ENCODE measurements at regions of chr22 and their contacts with region 1.

Region 1: GRCh38 chr22:36470162-36470993 is 11.1 kb downstream of the TXN2 start:
- DNase-seq: no peak
- H3K4me3 ChIP-seq: 0 out of 2 replicates have a peak overlapping the region, but pooled peaks have one; percentile 3
- CTCF ChIP-seq: peak; percentile 95

Region 2: GRCh38 chr22:36311386-36312358 is 158.7 kb before region 1 on chr22:
- CTCF ChIA-PET with region 1: interaction called, 16 read pairs
- POLR2A ChIA-PET with region 1: no interaction called
- DNase-seq: no peak
- H3K4me3 ChIP-seq: no peak overlapping the region
- CTCF ChIP-seq: no peak

Region 3: DNA sequence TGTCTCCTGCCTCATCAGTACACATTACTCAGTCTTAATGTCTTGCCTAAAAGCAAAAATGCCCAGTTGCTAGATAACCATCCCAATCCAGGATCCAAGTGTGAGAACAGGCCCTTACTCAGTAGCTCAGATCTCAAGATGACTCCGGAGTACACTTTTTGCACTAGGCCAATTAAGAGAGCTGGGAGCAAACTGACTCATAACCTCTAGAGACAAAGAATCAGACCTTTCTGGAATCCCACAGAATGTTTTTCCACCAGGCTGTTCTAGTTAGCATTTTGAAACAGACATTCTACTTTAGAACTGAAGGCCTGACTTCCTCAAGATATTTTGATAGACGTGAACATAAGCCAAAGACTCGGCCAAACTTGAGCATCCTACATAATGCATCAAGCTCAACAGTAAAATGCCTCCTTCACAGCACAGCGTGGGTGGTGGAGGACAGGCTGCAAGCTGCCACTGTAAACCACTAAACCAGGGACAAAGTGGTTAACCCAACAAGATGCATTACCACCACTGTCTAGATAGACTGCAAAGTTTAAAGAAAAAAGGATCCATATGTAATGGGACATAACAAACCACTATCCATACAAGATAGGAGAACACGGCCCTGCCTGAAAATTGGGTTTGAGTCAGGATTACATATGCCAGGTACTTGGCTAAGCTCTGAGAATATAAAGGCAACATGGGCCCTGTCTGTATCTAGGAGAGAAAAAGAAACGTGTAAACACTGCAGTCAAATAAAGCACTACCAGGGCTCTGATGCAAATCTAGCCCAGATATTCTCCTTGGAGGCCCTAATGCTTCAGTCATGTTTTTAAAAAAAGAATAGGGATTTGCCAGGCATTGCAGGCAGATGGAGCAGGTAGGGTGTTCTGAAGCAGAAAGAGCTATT is 131.0 kb before region 1 on chr22:
- CTCF ChIA-PET with region 1: interaction called, 45 read pairs
- POLR2A ChIA-PET with region 1: interaction called, 5 read pairs
- DNase-seq: peak; percentile 62
- H3K4me3 ChIP-seq: no peak overlapping the region
- CTCF ChIP-seq: no peak

Region 4: DNA sequence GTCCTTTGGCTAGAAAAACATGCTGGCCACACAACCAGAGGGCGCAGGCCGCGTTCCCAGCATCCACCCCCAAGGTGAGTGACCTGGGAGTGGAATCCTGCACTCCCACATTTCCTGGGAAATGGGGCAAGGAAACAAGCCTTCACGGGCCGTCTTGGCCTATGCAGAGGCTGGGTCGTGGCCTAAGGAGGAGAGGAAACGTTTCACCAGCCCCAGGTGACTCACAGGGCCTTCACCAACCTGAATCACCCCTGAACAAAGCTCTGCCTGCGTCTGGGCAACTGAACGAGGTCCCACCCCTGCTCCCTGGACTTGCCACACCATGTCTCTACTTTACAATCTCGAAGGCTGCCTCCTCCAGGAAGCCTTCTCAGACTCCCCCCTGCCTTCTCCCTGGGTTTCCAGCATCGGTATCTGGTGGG is 95.8 kb before region 1 on chr22:
- CTCF ChIA-PET with region 1: interaction called, 34 read pairs
- POLR2A ChIA-PET with region 1: interaction called, 12 read pairs
- DNase-seq: no peak
- H3K4me3 ChIP-seq: 0 out of 2 replicates have a peak overlapping the region, but pooled peaks have one; percentile 12
- CTCF ChIP-seq: no peak

Region 5: GRCh38 chr22:36398621-36399469 is 71.5 kb before region 1 on chr22:
- CTCF ChIA-PET with region 1: interaction called, 10 read pairs
- POLR2A ChIA-PET with region 1: no interaction called
- DNase-seq: no peak
- H3K4me3 ChIP-seq: no peak overlapping the region
- CTCF ChIP-seq: no peak

Measured in AG04449 (cell line).